Astrocyte of the cerebellum (primary cell): ENCODE measurements at regions of chr6 and their contacts with region 1.

Region 1: DNA sequence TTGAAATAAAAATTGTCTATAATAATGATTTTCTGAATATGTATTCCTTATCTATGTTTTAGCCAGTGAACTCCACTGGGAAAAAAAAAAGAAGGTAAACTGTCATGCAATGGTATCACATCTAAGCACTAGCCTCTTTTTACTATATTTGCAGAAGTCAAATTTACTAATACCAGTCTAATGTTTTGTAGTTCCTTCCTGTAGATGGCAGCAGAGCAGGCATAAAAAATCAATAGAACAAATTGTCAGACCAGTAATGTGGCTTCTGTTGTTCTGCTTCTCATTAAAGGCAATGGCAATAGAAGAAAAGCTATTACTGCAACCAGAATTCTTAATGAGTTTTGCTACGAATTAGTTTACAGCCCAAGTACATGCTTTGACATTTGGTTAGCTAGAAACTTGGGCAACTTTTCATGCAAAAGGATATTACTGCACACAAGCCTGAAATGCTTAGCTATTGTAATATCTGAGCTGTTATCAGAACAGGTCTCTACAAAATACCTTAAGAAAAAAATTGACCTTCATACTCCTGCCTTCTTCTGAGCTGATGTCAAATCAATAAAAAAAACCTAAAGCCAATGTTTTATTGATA is 476.9 kb downstream of the KHDRBS2 start:
- DNase-seq: no peak
- H3K4me3 ChIP-seq: no peak overlapping the region
- CTCF ChIP-seq: no peak

Region 2: DNA sequence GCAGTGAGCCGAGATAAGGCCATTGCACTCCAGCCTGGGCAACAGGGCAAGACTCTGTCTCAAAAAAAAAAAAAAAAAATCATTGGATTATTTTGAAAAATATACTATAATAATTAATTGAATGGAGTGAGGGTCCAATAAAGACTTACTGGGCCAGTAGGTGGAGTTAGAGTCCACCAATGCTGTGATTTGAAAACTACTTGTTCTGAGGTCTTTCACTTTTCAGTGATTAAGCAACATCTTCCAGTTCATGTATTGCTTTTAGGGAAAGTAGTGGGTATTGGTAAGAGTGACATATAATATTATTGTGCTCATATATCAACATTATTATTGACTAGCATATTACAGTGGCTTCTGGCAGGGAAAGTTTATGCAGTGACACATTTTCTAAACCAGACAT is 53.4 kb before region 1 on chr6:
- in situ Hi-C with region 1: no loop called
- DNase-seq: no peak
- H3K4me3 ChIP-seq: no peak overlapping the region
- CTCF ChIP-seq: no peak

Region 3: DNA sequence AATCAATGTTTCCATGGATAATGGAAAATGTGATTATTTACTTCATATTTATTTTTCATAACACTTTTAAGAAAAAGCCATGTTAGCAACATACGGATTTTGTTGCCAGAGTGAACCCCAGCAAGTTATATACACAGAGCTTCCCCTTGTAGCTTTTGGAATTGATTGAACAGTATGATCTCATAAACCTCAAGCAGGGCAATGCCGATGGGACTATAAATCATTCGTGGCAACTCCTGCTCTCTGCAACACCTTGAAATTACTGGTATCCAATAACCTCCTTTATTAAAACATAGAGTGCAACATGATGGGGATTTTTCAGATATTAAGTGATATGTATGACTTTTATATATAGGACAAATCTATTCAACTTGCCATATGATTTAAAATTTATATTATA is 48.4 kb after region 1 on chr6:
- in situ Hi-C with region 1: loop called (anchors 5 kb)
- DNase-seq: no peak
- H3K4me3 ChIP-seq: no peak overlapping the region
- CTCF ChIP-seq: no peak

Region 4: DNA sequence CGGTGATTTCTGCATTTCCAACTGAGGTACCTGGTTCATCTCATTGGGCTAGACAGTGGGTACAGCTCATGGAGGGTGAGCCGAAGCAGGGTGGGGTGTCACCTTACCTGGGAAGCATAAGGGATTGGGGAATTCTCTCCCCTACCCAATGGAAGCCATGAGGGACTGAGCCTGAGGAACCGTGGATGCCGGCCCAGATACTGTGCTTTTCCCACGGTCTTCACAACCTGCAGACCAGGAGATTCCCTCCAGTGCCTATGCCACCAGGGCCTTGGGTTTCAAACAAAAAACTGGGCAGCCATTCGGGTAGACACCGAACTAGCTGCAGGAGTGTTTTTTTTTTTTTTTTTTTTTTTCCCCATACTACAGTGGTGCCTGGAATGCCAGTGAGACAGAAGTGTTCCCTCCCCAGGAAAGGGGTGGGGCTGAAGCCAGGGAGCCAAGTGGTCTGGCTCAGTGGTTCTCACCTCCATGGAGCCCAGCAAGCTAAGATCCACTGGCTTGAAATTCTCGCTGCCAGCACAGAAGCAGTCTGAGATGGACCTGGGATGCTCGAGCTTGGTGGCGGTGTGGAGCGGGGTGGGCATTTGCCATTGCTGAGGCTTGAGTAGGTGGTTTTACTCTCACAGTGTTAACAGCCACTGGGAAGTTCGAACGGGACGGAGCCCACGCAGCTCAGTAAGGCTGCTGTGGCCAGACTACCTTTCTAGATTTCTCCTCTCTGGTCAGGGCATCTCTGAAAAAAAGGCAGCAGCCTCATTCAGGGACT is 60.7 kb after region 1 on chr6:
- in situ Hi-C with region 1: no loop called
- DNase-seq: no peak
- H3K4me3 ChIP-seq: no peak overlapping the region
- CTCF ChIP-seq: no peak

Region 5: DNA sequence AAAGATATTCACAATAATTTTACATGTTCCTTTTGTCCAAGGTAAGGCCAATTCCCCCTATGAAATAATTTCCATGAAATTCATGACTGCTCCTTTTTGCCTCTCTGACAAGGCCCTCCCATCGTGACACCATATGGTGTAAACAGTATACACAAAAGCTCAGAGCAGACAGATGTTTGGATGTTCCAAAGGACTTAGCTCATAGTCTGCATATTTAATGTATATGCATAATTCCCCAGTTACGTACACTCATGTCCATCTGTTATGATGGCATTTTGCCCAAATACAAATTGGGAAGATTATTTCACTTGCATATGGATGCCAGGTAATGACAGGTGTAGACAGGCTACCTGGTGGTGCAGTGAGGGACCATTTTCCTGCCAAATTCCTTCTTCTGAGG is 100.4 kb after region 1 on chr6:
- in situ Hi-C with region 1: no loop called
- DNase-seq: no peak
- H3K4me3 ChIP-seq: no peak overlapping the region
- CTCF ChIP-seq: no peak